Dendritic cell treated with granulocyte-macrophage colony-stimulating factor and Interleukin-4, amounts not matched to agents 40 ng/mL and 50 ng/mL, for 4 days (primary cell): ENCODE measurements at regions of chrX and their contacts with region 1.

Region 1: GRCh38 chrX:53556868-53557267 is 122.7 kb upstream of the HSD17B10 start:
- H3K4me3 Mint-ChIP-seq: no peak overlapping the region
- H3K27ac Mint-ChIP-seq: no peak overlapping the region
- H3K4me1 Mint-ChIP-seq: no peaks in the 10 kb centered on the region
- H3K27me3 Mint-ChIP-seq: no peaks in the 10 kb centered on the region

Region 2: GRCh38 chrX:53599781-53600396 is 43.0 kb after region 1 on chrX:
- intact Hi-C with region 1: loop called (anchors 10 kb)
- H3K4me3 Mint-ChIP-seq: no peak overlapping the region
- H3K27ac Mint-ChIP-seq: no peak overlapping the region
- H3K4me1 Mint-ChIP-seq: no peaks in the 10 kb centered on the region
- H3K27me3 Mint-ChIP-seq: no peaks in the 10 kb centered on the region